ENCODE measurements at regions of chr1 and their contacts with region 1.

Region 1: DNA sequence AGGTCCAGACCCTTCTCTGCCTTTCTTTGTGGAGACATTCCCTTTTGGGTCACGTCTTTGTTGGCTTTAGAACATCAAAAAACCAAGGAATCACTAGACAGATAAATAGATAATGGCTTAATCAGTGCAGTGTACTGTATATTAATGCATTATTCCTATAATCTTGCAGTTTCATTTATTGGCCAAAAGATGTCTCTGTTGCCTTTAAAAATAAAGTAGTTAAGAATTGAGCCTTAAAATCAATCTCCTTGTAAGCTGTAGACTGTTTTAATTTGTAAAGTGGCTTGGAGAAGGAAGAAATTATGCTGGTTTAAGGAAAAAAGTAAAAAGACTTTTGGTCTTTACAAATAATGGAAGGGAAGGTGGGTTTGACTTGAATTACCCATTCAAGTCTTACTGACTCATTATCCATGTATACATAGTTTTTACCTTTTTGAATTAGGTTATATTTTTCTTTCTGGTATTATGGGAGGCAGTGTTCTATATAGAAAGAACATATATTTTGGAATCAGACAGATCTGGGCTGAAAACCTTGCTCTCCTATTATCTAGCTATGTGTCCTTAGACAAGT is 84.6 kb downstream of the VPS13D start:
- DNase-seq: peak in 1 of 2 donors; percentile 36
- H3K4me3 ChIP-seq: no peak overlapping the region
- H3K27ac ChIP-seq: peak overlapping the region in 3 of 5 donors; percentile 43 to 78 (median 72)
- H3K4me1 ChIP-seq: peaks cover 0 to 47% (median 14%) of the 10 kb centered on the region in 4 donors
- H3K27me3 ChIP-seq: no peaks in the 10 kb centered on the region
- CTCF ChIP-seq: peak in 5 of 7 experiments; percentile 10 to 50 (median 29)
- EP300 ChIP-seq: no peak
- POLR2A ChIP-seq: no peak

Region 2: DNA sequence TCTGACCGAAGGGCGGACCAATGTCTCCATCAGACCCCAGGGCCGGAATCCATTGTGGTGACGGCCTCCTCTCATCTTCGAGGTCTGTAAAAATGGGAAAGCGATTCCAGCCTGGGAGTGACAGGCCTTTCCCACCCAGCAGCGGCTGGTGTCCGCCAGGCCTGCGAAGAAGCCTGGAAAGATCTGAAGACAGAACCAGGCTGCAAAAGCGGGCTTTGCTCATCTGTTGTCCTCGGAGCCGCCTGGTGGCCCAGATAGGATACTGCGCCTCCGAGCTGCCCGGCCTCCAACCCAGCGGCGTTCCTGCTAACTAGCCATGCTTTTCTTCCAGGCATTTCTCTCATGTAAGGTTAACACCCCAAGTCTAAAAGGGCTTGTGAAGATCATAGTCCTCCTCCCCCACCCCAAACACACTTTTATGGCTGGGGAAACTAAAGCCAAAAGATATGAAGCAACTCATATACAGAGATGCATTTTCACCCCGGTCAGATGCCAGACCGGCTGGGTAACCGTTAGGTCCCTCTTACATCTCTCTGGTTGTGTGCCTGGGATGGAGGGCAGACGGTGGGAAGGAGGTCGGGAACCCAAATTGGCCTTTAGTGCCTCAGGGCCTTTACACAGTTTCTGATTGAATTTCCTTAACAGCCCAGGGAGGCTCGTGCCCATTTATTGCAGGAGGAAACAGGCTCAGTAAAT is 305.5 kb after region 1 on chr1:
- intact Hi-C with region 1: loop called (anchors 10 kb)
- DNase-seq: peak; percentile 92 to 95
- H3K4me3 ChIP-seq: peak overlapping the region; percentile 73 to 84 (median 77)
- H3K27ac ChIP-seq: peak overlapping the region; percentile 95 to 98 (median 97)
- H3K4me1 ChIP-seq: peaks cover 33 to 68% (median 66%) of the 10 kb centered on the region in 4 donors
- H3K27me3 ChIP-seq: peaks cover 0 to 7% (median 0%) of the 10 kb centered on the region in 3 donors
- CTCF ChIP-seq: peak in 6 of 7 experiments; percentile 48 to 99 (median 97)
- EP300 ChIP-seq: no peak
- POLR2A ChIP-seq: no peak

Region 3: DNA sequence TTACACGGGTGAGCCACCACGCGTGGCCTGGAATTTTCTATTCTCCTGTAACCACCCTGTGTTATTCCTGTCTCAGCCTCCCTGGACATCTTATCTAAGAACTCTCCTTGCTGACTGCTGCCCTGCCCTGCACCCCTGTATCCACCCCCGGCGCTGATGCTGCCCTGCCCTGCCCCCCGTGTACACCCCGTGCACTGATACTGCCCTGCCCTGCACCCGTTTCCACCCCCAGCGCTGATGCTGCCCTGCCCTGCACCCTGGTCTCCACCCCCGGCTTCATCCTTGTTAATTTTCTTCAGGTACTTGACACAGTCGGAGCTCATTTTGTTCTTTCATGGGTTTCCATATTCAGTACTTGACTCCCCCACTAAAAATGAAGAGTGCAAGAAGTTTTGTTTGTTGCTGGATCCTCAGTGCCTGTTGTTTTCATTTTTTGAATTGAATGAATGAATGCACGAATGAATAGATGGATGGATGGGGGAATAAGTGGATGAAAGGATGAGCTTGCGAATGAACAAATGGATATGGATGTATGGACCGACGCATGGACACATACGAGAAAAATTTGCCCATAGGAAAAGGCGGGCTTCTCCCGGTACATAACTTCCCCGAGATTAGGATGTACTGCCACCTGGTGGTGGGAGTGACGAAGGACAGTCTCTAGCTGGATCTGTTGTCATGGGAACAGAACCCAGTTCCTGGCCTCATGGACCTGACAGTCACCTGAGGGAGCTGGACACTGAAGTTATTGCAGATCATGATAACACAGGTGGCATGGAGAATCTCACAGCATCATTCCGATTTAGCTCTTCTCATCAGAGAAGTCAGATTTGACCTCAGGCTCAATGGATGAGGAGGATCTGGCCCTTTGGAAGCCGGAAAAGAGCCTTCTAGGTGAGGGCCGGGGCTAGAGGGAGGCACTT is 344.4 kb after region 1 on chr1:
- intact Hi-C with region 1: loop called (anchors 10 kb)
- DNase-seq: peak; percentile 82 to 92
- H3K4me3 ChIP-seq: no peak overlapping the region
- H3K27ac ChIP-seq: no peak overlapping the region
- H3K4me1 ChIP-seq: peaks cover 0 to 9% (median 7%) of the 10 kb centered on the region in 4 donors
- H3K27me3 ChIP-seq: no peaks in the 10 kb centered on the region
- CTCF ChIP-seq: peak in 6 of 7 experiments; percentile 58 to 98 (median 94)
- EP300 ChIP-seq: no peak
- POLR2A ChIP-seq: no peak

Measured in stomach (tissue), 19 donors.